Esophagus squamous epithelium (tissue), 5 donors: ENCODE measurements at regions of chr12 and their contacts with region 1.

Region 1: DNA sequence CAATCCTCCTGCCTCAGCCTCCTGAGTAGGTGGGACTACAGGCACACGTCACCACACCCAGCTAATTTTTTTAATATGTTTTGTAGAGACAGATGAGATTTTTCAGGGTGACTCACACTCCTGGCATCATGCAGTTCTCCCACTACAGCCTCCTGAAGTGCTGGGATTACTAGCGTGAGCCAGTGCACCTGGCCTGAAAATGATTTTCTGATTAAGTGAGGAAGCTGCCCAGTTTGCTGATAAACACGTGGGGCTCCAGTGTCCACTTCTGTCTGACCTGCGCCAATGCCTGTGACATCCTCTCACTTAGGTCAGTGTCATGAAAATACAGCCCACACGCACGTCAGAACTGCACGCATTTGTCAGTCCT is 37.0 kb upstream of the SFSWAP start:
- DNase-seq: no peak
- H3K4me3 ChIP-seq: no peak overlapping the region
- H3K27ac ChIP-seq: no peak overlapping the region
- H3K4me1 ChIP-seq: no peaks in the 10 kb centered on the region
- H3K27me3 ChIP-seq: peaks cover 0 to 53% (median 0%) of the 10 kb centered on the region in 4 donors
- CTCF ChIP-seq: no peak
- POLR2A ChIP-seq: no peak

Region 2: GRCh38 chr12:131290255-131290959 is 383.5 kb before region 1 on chr12:
- intact Hi-C with region 1: loop called (anchors 10 kb)
- DNase-seq: no peak
- H3K4me3 ChIP-seq: no peak overlapping the region
- H3K27ac ChIP-seq: no peak overlapping the region
- H3K4me1 ChIP-seq: no peaks in the 10 kb centered on the region
- H3K27me3 ChIP-seq: peaks cover 0 to 6% (median 0%) of the 10 kb centered on the region in 4 donors
- CTCF ChIP-seq: no peak
- POLR2A ChIP-seq: no peak